Left cardiac atrium (tissue), 4 donors: ENCODE measurements at regions of chr7 and their contacts with region 1.

Region 1: GRCh38 chr7:30800785-30801252 is 29.6 kb downstream of the MINDY4 start:
- DNase-seq: peak; percentile 47
- ATAC-seq: peak; percentile 68 to 72

Region 2: DNA sequence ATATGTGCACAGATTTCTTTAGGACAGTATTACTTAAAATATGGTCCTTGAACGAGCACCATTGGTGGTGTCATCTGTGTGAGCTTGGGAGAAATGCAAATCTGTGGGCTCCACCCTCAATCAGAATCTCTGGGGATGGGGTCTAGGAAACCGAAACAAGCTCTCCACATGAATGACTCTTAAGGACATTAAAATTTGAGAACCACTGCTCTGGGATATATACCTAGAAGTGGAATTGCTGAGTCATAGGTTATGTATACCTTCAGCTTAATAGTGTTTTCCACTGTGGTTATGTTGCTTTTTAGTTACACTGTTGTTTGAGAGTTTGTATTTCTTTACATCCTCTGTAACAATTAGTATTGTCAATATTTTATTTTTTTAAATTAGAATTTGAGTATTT is 492.4 kb before region 1 on chr7:
- intact Hi-C with region 1: no loop called
- DNase-seq: no peak
- ATAC-seq: no peak

Region 3: DNA sequence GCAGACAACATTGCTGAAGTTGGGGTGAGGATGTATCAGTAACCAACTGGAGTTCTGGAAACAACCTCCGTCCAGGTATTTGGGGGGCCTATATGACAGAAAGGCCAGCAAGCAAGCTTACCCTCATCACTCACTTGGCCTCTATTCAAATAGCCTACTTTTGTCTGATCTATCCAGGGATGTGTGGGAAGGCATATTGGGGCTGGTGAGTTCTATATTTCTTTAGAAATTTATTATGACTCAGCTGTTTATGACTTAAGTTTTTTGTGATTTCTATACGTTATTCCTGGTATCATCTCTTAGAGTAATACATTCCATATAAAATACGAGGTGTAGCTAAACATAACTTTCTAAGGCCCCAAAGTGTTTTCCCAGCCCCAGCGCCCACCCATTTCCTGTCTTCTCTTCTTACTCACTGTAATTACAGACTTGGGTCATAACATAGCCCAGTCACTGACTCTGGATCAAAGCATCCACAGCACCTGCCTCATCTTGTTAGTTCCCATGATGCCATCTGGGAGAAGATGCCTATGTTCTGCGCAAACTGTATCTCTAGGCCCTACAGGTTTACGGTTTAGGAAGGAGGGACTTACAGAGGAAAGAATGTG is 188.1 kb before region 1 on chr7:
- intact Hi-C with region 1: no loop called
- DNase-seq: no peak
- ATAC-seq: no peak

Region 4: GRCh38 chr7:30938435-30939316 is 137.9 kb after region 1 on chr7:
- intact Hi-C with region 1: loop called in 1 of 2 experiments (anchors 5 kb)
- DNase-seq: peak; percentile 83
- ATAC-seq: peak; percentile 86 to 91

Region 5: DNA sequence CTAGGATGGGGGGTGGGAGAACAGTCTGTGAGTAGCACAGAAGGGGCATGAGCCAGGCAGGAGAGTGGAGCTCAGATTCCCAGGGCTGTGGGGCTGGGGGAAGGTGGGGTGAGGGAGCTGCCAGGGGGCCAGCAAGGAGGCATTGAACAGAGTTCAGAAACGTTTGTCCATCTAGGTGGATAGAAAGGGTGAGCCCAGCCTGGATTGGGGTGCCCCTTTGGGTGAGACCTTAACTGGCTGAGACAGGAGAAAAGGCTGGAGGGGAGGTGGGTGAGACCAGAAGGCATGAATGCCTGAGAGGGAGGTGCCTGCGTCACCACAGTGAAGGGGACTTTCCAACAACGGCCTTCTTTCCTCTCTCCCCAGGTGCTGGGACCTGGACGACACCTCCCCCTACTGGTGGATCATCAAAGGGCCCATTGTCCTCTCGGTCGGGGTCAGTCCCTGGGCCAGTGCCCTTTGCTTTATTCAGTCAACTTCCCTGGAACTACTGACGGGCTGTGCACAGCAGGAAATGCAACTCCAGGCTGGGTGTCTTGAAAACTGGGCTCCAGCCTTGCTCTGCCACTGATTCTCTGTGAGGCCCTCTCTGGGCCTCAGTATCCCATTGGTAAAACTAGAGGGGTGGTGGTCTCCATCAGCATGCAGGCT is 173.9 kb after region 1 on chr7:
- intact Hi-C with region 1: loop called (anchors 2 kb)
- DNase-seq: peak; percentile 62
- ATAC-seq: peak; percentile 83

Region 6: GRCh38 chr7:31122649-31123058 is 321.8 kb after region 1 on chr7:
- intact Hi-C with region 1: loop called in 1 of 2 experiments (anchors 1 kb)
- DNase-seq: peak; percentile 66
- ATAC-seq: peak; percentile 86 to 90